AG04449 (cell line): ENCODE measurements at regions of chr10 and their contacts with region 1.

Region 1: DNA sequence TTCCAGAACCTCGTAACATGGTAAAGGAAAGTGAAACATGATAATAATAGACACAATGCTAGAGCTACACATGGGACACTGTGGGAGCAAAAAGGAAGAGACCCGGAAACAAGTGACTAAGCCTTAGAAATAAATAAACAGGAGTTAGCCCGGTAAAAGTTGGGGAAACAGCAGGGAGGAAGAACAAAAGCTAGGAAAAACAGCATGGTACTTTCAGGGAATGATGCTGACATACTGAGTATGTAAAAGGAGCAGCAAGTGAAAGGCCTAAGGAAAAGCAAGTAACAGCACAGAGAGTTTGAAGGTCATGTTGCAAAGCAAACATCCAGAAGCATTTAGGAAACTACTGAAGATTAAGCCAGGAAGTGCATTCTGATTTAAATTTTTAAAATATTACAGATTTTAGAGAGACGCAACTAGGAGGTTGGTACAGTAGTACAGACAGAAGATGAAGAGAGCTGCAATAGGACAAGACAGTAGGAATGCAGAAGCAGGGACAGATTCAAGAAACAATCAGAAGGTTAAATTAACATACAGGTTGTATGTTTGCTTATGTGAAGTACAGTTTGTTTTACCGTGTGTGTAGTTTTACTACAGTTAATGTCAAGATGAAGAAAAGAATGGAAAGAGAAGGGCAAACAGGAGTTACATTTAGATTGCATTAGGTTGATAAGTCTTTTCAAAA is 63.7 kb downstream of the ARHGAP12 start:
- DNase-seq: no peak
- H3K4me3 ChIP-seq: no peak overlapping the region
- CTCF ChIP-seq: no peak

Region 2: GRCh38 chr10:31669357-31669756 is 195.6 kb before region 1 on chr10:
- CTCF ChIA-PET with region 1: no interaction called
- POLR2A ChIA-PET with region 1: no interaction called
- DNase-seq: no peak
- H3K4me3 ChIP-seq: no peak overlapping the region
- CTCF ChIP-seq: no peak

Region 3: DNA sequence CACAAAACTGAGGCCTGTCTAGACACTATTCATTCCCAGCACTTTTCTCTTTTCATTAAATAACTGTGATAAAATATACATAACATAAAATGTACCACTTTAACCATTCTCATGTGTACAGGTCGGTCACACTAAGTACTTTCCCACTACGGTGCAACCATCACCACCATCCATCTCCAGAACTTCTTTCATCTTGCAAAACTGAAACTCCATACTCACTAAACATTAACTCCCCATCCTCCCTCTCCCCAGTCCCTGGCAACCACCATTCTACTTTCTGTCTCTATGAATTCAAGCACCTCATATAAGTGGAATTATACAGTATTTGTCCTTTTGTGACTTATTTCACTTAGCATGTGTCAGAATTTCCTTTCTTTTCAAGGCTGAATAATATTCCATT is 10.6 kb after region 1 on chr10:
- CTCF ChIA-PET with region 1: interaction called, 11 read pairs
- POLR2A ChIA-PET with region 1: no interaction called
- DNase-seq: no peak
- H3K4me3 ChIP-seq: no peak overlapping the region
- CTCF ChIP-seq: no peak

Region 4: DNA sequence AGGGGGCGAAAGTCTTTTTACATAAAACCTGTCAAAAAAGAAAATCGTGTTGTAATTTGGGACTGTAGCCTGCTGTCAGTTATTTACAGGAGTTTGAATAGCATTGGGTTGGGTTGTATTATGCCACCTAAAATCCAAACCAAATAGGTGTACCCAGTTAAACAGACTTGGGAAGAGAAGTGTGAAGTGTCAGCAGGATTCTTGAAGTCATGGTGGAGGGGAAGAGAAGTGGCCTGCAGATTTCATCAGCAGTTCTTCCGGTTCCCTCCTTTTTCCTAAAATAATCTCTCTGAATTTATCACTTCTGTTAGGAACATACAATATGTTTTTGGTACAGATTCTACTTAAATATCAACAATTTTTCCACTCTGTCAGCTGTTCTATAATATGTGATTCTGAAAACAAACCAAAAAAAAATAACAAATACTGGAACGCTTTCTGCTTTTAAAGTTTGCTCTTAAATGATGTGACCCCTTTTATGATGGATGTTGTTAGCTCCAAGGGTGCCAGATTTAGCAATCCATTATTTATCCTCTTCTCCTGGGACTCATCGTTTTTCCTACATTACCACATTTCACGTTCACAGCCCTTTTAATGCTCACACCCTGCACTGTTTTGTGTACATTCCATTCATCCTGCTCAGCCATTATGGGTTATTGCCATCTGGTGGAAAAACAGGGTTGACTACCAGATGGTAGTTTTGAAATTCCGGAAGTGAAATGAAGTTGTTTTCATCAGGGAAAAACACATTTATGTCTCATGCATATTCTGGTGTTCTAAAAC is 82.4 kb after region 1 on chr10:
- CTCF ChIA-PET with region 1: interaction called, 11 read pairs
- POLR2A ChIA-PET with region 1: no interaction called
- DNase-seq: peak; percentile 80
- H3K4me3 ChIP-seq: peak overlapping the region; percentile 34
- CTCF ChIP-seq: peak; percentile 17

Region 5: DNA sequence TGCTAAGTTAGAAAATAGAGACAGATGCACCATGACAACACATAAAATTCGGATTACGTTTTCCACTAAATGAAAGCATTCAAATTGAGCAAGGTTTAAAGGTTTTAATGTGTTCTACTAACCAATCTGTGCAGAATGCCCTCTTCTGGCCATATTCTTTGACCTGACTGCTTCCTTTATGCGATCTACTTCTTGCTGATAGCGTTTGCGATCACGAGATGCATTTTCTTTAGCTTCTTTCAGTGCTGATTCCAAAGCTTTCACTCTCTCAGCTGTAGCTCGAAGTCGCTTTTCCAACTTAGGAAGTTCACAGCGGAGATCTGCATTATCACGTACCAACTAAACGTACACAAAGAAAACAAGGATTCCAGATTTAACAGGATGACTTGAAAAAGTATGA is 152.0 kb after region 1 on chr10:
- CTCF ChIA-PET with region 1: interaction called, 14 read pairs
- POLR2A ChIA-PET with region 1: no interaction called
- DNase-seq: no peak
- H3K4me3 ChIP-seq: no peak overlapping the region
- CTCF ChIP-seq: no peak

Region 6: GRCh38 chr10:32190890-32191491 is 326.0 kb after region 1 on chr10:
- CTCF ChIA-PET with region 1: no interaction called
- POLR2A ChIA-PET with region 1: no interaction called
- DNase-seq: no peak
- H3K4me3 ChIP-seq: no peak overlapping the region
- CTCF ChIP-seq: peak; percentile 45